H1 (cell line): ENCODE measurements at regions of chr20 and their contacts with region 1.

Region 1: DNA sequence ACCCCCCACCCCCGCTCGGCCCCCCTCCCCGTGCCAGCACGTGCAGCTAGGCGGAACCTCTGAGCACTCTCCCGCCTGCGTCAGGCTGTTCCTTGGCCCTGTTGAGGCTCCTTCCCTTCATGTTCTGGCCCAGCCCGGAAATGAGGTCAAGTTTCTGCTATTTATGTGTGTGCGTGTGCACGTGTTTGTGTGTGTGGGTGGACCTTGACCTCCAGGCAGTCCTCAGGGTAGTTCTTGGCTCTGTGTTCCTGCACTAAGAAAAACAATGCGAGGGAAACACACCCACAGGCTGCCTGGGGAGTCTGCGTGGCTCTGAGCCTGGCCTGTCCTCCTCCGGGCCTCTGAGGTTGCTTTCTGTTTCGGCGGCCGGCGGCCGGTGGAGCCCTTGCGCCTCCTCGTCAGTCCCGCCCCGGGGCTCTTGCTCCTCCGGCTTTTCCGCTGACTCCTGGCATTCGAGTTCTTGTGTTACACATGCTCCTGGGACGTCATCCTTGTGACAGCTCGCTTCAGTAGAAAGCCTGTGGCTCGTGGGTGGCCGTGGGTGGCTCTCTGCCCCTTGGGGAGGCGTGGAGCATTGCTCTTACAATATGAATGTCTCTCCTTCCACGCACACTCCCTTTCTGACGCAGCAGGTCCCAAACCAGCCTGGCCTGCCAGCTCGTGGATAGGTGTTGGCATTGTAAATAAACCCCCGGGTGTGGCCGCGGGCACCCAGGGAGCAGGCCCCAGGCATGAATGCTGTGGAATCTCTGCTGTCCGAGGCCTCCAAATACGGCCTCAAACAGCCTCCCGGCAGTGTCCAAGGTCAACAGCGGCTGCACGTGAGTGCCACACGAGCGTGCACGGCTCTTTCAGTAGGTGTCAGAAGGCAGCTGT is 10.0 kb downstream of the SLCO4A1 start:
- DNase-seq: peak in 1 of 2 experiments; percentile 64
- H3K4me3 ChIP-seq: no peak overlapping the region
- H3K27ac ChIP-seq: no peak overlapping the region
- H3K4me1 ChIP-seq: peaks cover 0 to 14% (median 9%) of the 10 kb centered on the region in 4 experiments; a peak in 5 of 7 replicates
- H3K27me3 ChIP-seq: no peaks in the 10 kb centered on the region
- CTCF ChIP-seq: no peak
- EP300 ChIP-seq: no peak
- POLR2A ChIP-seq: no peak
- RAD21 ChIP-seq: no peak

Region 2: DNA sequence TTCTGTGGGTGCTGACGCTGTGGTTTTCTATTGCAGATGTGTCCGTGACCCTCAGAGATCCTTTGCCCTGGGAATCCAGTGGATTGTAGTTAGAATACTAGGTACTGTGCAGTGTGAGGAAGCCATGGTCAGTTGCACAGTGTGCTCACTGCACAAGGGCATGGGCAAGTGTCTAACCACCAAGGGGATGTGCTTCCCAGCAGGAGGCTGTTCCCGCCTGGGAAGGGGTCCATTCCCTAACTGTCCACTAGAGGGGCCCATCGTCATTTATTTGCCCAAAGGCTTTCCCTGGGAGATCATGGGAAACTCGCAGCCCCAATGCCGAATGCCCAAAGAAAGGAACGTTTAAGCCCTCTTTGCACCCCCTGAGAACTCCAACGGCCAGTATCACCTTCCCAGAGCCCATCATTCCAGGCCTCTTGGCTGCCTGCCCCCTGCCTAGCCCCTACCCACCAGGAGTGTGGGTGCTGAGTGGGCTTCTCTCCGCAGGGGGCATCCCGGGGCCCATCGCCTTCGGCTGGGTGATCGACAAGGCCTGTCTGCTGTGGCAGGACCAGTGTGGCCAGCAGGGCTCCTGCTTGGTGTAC is 16.2 kb after region 1 on chr20:
- CTCF ChIA-PET with region 1: interaction called, 13 read pairs
- POLR2A ChIA-PET with region 1: no interaction called
- DNase-seq: peak; percentile 44 to 89
- H3K4me3 ChIP-seq: no peak overlapping the region
- H3K27ac ChIP-seq: no peak overlapping the region
- H3K4me1 ChIP-seq: no peaks in the 10 kb centered on the region
- H3K27me3 ChIP-seq: no peaks in the 10 kb centered on the region; a peak in 1 of 7 replicates
- CTCF ChIP-seq: peak; percentile 87 to 96 (median 94)
- EP300 ChIP-seq: no peak
- POLR2A ChIP-seq: no peak
- RAD21 ChIP-seq: peak; percentile 92 to 96